K562 (cell line): ENCODE measurements at regions of chr9 and their contacts with region 1.

Region 1: DNA sequence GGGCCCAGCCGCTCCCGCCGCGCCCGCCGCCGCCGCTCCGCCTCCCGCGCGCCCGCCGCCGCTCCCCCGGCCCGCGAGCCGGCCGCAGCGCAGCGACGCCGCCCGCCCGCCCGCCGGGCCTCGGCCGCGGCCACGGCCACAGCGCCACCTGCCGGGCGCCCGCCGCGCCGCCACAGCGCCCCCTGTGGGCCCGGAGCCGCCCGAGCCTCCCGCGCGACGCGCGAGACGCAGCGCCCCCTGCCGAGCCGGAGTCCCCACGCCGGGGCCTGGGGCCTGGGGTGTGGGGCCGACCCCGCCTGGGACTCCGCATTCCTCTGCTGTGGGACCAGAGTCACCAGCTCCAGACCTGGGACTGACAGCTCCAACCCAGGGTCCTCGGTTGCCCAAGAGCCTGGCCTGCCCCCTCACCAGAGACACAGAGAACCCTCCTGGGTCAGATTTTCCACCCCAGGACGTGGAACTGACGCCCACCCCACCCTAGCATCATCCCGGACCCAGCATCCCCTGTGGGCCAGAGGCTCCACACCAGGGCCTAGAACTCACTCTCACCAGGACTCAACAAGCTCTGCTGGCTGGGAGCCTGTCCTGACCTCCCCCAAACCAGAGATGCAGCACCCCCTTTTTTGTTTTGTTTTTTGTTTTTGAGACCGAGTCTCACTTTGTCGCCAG is at the start of gene RAPGEF1:
- DNase-seq: peak; percentile 75 to 92 (median 88)
- ATAC-seq: peak; percentile 89
- H3K4me3 ChIP-seq: peak within 1 kb of the TSS; percentile 64
- H3K27ac ChIP-seq: peak within 1 kb of the TSS; percentile 51; the same call in 1 of the 3 replicates
- H3K4me1 ChIP-seq: peaks cover 11 to 31% of the 10 kb centered on the region in 2 experiments; a peak in 4 of 5 replicates
- H3K27me3 ChIP-seq: no peaks in the 10 kb centered on the region
- CTCF ChIP-seq: peak; percentile 62 to 99 (median 98)
- EP300 ChIP-seq: no peak; the same call in 1 of the 2 replicates
- POLR2A ChIP-seq: no peak
- RAD21 ChIP-seq: peak; percentile 57 to 90
- polyA plus RNA-seq, gene RAPGEF1: 0.06 to 0.10 TPM

Region 2: GRCh38 chr9:131349881-131350563 is 390.1 kb before region 1 on chr9:
- CTCF ChIA-PET with region 1: interaction called, 11 read pairs
- POLR2A ChIA-PET with region 1: no interaction called
- in situ Hi-C with region 1: loop called (anchors 5 kb)
- intact Hi-C with region 1: no loop called
- DNase-seq: peak; percentile 82 to 90 (median 86)
- ATAC-seq: peak; percentile 99
- H3K4me3 ChIP-seq: peak overlapping the region; percentile 29
- H3K27ac ChIP-seq: no peak overlapping the region; the same call in 2 of the 3 replicates
- H3K4me1 ChIP-seq: peaks cover 3 to 25% of the 10 kb centered on the region in 2 experiments; a peak in 4 of 5 replicates
- H3K27me3 ChIP-seq: no peaks in the 10 kb centered on the region
- CTCF ChIP-seq: peak; percentile 90 to 91 (median 91)
- EP300 ChIP-seq: no peak
- POLR2A ChIP-seq: no peak
- RAD21 ChIP-seq: peak; percentile 86 to 93

Region 3: DNA sequence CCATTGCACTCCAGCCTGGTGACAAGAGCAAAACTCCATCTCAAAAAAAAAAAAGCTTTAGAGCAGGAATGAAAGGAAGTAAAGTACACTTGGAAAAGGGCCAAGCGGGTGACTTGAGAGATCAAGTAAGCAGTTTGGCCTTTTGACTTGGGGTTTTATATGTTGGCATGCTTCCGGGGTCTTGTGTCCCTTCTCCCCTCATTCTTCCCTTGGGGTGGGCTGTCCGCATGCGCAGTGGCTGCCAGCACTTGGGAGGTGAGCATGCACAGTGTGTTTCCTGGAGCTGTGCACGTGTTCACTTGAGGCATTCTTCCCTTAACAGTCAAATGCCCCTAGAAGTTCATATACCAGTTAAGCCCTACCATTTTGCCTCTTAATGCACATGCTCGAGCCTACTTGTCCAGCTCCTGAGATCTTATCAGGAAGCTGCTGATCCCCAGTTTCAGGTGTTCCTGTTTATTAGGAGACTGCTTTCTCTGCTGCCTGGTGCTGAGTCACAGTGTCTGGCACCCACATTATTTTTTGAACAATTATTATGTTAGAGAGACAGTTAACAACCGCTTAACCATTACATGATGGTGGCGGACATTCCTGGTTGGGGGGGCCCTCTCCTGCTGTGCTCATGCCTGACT is 378.8 kb before region 1 on chr9:
- CTCF ChIA-PET with region 1: interaction called, 5 read pairs
- POLR2A ChIA-PET with region 1: no interaction called
- in situ Hi-C with region 1: loop called (anchors 5 kb)
- intact Hi-C with region 1: no loop called
- DNase-seq: peak in 2 of 4 experiments; percentile 34 to 43
- ATAC-seq: peak; percentile 61
- H3K4me3 ChIP-seq: no peak overlapping the region
- H3K27ac ChIP-seq: peak overlapping the region; percentile 24; the same call in 1 of the 3 replicates
- H3K4me1 ChIP-seq: peaks cover 15 to 18% of the 10 kb centered on the region in 2 experiments
- H3K27me3 ChIP-seq: no peaks in the 10 kb centered on the region
- CTCF ChIP-seq: no peak
- EP300 ChIP-seq: no peak; the same call in 1 of the 2 replicates
- POLR2A ChIP-seq: no peak
- RAD21 ChIP-seq: no peak

Region 4: GRCh38 chr9:131502781-131503625 is 237.1 kb before region 1 on chr9 and contains the start of gene POMT1:
- CTCF ChIA-PET with region 1: interaction called, 4 read pairs
- POLR2A ChIA-PET with region 1: no interaction called
- in situ Hi-C with region 1: no loop called
- intact Hi-C with region 1: loop called (anchors 10 kb)
- DNase-seq: peak; percentile 93 to 99 (median 98)
- ATAC-seq: peak; percentile 91
- H3K4me3 ChIP-seq: peak within 1 kb of the TSS; percentile 89
- H3K27ac ChIP-seq: peak within 1 kb of the TSS; percentile 62
- H3K4me1 ChIP-seq: peaks cover 4 to 25% of the 10 kb centered on the region in 2 experiments; a peak in 4 of 5 replicates
- H3K27me3 ChIP-seq: no peaks in the 10 kb centered on the region
- CTCF ChIP-seq: 0 out of 6 replicates have a peak, but pooled peaks of 1 of the 3 experiments have one; percentile 0
- EP300 ChIP-seq: no peak
- POLR2A ChIP-seq: peak; percentile 72; the same call in 1 of the 2 replicates
- RAD21 ChIP-seq: no peak
- polyA plus RNA-seq, gene POMT1: 1.8 to 2.1 TPM

Region 5: DNA sequence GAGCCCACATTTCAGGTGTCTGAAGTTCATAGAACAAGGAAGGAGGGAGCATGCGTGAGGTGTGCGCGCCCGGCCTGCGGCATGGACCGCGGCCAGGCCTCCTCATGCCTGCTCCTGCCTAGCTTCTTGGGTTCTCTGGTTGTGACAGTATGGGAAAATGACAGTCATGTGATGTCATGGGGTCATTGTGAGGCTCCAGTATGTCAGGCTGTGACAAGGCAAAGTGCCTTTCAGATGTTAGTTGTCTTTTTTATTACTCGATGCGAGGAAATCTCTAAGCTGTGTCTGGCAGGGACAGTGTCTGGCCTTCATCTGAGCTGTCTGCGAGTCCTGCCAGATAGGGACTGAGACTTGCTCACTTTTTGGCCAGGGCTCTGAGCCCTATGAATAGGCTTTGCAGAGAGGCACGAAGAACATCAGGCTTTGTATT is 222.3 kb before region 1 on chr9:
- CTCF ChIA-PET with region 1: no interaction called
- POLR2A ChIA-PET with region 1: no interaction called
- in situ Hi-C with region 1: loop called (anchors 10 kb)
- intact Hi-C with region 1: no loop called
- DNase-seq: no peak
- ATAC-seq: no peak
- H3K4me3 ChIP-seq: no peak overlapping the region
- H3K27ac ChIP-seq: no peak overlapping the region
- H3K4me1 ChIP-seq: peaks cover 0 to 7% of the 10 kb centered on the region in 2 experiments; a peak in 1 of 5 replicates
- H3K27me3 ChIP-seq: no peaks in the 10 kb centered on the region
- CTCF ChIP-seq: no peak
- EP300 ChIP-seq: no peak
- POLR2A ChIP-seq: no peak
- RAD21 ChIP-seq: no peak

Region 6: DNA sequence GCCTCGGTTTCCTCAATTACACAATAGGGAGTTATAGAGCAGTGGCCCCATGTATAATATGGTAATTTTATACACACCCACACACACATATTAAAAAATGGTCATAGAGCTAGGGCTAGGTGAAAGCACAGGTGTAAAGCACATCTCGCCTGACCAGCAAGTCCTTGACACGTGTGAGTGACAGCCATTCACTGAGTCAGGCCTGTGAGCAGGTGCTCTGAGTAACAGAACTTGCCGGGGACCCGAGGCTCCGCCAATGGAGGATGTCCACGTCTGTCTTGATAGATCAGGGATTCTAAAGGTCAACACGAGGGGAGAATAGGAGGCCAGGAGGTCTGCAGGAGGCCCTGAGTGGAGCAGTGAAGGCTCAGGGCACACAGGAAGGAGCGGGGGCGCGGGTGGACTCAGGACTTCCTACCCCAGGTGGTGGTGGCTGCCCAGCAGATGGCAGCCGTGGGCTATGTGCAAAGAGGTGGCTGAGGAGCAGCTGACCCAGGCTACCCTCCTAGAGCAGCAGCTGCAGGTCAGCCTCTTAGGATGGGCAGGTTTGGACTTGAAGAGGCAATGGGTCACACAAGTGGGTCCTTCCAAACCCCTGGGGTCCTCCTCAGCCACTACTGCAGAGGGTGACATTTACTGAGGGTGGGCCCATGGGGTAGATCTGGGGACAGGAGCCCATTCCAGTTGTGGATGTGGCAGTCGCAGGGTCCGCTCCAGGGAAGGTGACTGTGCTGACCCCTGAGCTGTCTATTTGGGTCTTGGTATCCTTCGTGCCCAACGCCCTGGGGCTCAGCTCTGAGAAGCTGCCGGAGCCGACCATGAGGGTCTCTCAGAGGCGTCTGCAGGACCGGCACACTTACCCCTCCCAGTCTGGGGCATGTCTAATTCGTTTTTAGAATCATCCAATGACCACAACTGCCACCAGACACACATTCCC is 148.9 kb before region 1 on chr9:
- CTCF ChIA-PET with region 1: interaction called, 79 read pairs
- POLR2A ChIA-PET with region 1: interaction called, 4 read pairs
- in situ Hi-C with region 1: loop called (anchors 5 kb)
- intact Hi-C with region 1: no loop called
- DNase-seq: peak; percentile 72 to 77 (median 74)
- ATAC-seq: peak; percentile 95
- H3K4me3 ChIP-seq: no peak overlapping the region
- H3K27ac ChIP-seq: no peak overlapping the region
- H3K4me1 ChIP-seq: peaks cover 6 to 15% of the 10 kb centered on the region in 2 experiments; a peak in 4 of 5 replicates
- H3K27me3 ChIP-seq: no peaks in the 10 kb centered on the region
- CTCF ChIP-seq: peak; percentile 80 to 95 (median 81)
- EP300 ChIP-seq: no peak
- POLR2A ChIP-seq: no peak
- RAD21 ChIP-seq: peak; percentile 74 to 86

Region 7: DNA sequence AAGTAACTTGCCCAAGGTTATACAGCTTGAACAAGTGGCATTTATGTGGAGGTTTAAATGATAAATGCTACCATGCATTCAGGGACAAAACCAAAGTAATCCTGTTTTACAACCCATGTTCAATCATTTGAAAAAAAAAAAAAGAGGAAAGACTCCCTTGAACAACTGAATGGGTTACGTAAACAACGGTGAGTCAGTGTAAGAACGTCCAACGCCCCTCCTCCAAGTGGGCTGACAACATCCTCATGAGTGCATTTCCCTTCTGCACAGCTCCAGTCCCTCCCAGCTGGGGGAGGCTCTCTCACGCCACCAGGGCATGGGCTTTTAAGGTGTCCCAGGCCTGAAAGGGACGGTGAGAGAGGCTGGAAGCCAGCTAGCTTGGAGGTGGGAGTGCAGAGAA is 104.8 kb before region 1 on chr9:
- CTCF ChIA-PET with region 1: interaction called, 11 read pairs
- POLR2A ChIA-PET with region 1: no interaction called
- in situ Hi-C with region 1: no loop called
- intact Hi-C with region 1: no loop called
- DNase-seq: peak; percentile 85 to 93 (median 88)
- ATAC-seq: peak; percentile 99
- H3K4me3 ChIP-seq: no peak overlapping the region
- H3K27ac ChIP-seq: peak overlapping the region; percentile 84
- H3K4me1 ChIP-seq: peaks cover 24 to 27% of the 10 kb centered on the region in 2 experiments
- H3K27me3 ChIP-seq: no peaks in the 10 kb centered on the region
- CTCF ChIP-seq: peak in 2 of 3 experiments; percentile 35 to 42; a peak in 4 of 6 replicates
- EP300 ChIP-seq: peak; percentile 79
- POLR2A ChIP-seq: no peak
- RAD21 ChIP-seq: peak in 1 of 2 experiments; percentile 39; a peak in 1 of 4 replicates